ENCODE measurements at regions of chr6 and their contacts with region 1.

Region 1: DNA sequence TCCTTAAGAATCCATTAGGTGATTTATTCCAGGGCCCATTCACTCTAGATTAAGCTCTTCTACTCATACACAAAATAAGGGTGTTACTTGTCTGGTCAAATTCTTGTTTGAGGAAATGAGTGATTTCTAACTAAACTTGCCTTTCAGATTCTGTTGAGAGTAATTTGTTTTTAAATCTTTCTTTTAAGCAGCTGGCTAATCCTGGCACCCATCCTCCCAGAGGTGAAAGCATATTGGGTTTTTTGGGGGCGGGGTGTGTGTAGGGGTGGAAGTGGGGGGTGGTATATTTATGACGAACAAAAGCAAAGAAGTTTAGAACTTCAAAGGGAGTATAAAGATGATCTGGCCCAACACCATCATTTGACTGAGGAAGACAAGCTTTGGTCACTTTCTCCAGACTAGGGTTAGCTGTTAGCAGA is 94.7 kb downstream of the RTN4IP1 start:
- DNase-seq: peak; percentile 77
- H3K4me3 Mint-ChIP-seq: peak overlapping the region; percentile 29
- H3K27ac Mint-ChIP-seq: peak overlapping the region; percentile 79
- H3K4me1 Mint-ChIP-seq: peaks cover 47% of the 10 kb centered on the region
- H3K27me3 Mint-ChIP-seq: no peaks in the 10 kb centered on the region

Region 2: GRCh38 chr6:106546691-106547414 is 12.3 kb after region 1 on chr6:
- intact Hi-C with region 1: loop called (anchors 1 kb)
- DNase-seq: peak; percentile 51
- H3K4me3 Mint-ChIP-seq: no peak overlapping the region
- H3K27ac Mint-ChIP-seq: peak overlapping the region; percentile 49
- H3K4me1 Mint-ChIP-seq: peaks cover 21% of the 10 kb centered on the region
- H3K27me3 Mint-ChIP-seq: no peaks in the 10 kb centered on the region

Region 3: DNA sequence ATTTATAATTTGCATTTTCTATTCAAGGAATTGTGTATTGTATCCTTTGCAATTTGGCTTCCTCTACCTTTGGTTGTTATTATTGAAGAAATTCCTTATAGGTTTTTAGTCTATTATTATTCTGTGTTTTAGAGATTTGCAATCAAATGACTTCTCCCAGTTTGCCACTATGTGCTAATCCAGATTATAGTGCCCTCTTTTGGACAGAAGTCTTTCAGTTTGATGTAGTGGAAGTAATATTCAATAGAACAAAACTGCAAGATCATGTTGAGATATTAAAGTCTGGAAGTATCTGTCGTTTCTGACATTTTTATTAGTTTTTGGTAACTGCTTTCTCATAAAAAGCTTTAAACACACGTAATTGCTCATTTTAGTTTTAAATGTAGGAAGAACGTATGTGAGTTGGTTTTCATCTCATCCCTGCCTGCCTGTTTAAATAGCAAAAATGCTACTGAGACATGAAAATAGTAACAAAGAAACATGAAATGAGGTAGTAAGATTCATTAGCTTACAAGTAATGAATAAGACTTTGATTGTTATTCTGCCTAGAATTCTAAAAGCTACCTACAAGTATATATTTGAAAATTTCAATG is 21.9 kb after region 1 on chr6:
- intact Hi-C with region 1: loop called (anchors 2 kb)
- DNase-seq: no peak
- H3K4me3 Mint-ChIP-seq: no peak overlapping the region
- H3K27ac Mint-ChIP-seq: no peak overlapping the region
- H3K4me1 Mint-ChIP-seq: peaks cover 24% of the 10 kb centered on the region
- H3K27me3 Mint-ChIP-seq: no peaks in the 10 kb centered on the region